H1 (cell line): ENCODE measurements at regions of chr11 and their contacts with region 1.

Region 1: GRCh38 chr11:60932605-60933356 is 8.5 kb downstream of the TMEM132A start:
- DNase-seq: no peak
- H3K4me3 ChIP-seq: no peak overlapping the region
- H3K27ac ChIP-seq: 0 out of 2 replicates have a peak overlapping the region, but pooled peaks have one; percentile 38
- H3K4me1 ChIP-seq: peaks cover 0 to 3% (median 1%) of the 10 kb centered on the region in 4 experiments; a peak in 4 of 7 replicates
- H3K27me3 ChIP-seq: no peaks in the 10 kb centered on the region
- CTCF ChIP-seq: no peak
- EP300 ChIP-seq: no peak
- POLR2A ChIP-seq: no peak
- RAD21 ChIP-seq: no peak

Region 2: DNA sequence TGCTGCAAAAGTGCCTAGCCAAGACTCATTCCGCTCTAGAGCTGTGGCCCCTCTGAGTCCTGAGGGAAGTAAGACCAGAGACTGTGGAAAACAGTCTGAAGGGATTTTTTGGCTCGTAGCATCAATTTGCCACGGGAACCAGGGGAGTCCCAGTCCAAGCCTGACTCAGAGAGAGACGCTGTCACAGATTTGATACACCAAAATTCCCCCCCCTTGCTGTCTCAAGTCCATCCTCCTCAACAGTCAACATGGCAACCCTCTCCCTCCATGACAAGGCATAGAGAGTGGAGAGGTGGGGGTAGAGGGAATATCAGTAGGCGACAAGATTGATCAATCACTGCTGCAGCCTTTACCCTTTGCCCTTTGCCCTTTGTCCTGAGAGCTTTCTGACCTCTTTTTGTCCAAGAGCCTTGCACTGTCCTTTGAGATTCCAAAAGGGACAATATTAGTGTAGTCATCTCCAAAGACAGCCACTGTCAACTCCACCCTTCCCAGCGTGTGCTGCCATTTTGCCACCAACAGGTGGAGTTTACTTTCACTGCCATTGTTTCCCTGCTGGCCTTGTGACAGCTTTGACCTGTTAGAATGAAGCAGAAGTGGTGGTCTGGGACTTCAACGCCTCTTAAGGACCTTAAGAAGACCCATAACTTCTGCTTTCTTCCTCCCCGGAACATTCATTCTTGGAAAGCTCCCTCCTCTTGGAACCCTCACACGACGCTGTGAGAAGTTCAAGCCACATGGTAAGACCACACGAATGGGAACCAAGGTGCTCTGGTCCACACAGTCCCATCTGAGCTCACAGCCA is 11.9 kb after region 1 on chr11:
- CTCF ChIA-PET with region 1: interaction called, 20 read pairs
- POLR2A ChIA-PET with region 1: interaction called, 8 read pairs
- DNase-seq: no peak
- H3K4me3 ChIP-seq: no peak overlapping the region
- H3K27ac ChIP-seq: no peak overlapping the region
- H3K4me1 ChIP-seq: peaks cover 0 to 11% (median 7%) of the 10 kb centered on the region in 4 experiments; a peak in 6 of 7 replicates
- H3K27me3 ChIP-seq: peaks cover 0 to 1% (median 0%) of the 10 kb centered on the region in 4 experiments; a peak in 1 of 7 replicates
- CTCF ChIP-seq: peak; percentile 41 to 59 (median 52)
- EP300 ChIP-seq: no peak
- POLR2A ChIP-seq: no peak
- RAD21 ChIP-seq: peak; percentile 22 to 44; a peak in 3 of 4 replicates

Region 3: DNA sequence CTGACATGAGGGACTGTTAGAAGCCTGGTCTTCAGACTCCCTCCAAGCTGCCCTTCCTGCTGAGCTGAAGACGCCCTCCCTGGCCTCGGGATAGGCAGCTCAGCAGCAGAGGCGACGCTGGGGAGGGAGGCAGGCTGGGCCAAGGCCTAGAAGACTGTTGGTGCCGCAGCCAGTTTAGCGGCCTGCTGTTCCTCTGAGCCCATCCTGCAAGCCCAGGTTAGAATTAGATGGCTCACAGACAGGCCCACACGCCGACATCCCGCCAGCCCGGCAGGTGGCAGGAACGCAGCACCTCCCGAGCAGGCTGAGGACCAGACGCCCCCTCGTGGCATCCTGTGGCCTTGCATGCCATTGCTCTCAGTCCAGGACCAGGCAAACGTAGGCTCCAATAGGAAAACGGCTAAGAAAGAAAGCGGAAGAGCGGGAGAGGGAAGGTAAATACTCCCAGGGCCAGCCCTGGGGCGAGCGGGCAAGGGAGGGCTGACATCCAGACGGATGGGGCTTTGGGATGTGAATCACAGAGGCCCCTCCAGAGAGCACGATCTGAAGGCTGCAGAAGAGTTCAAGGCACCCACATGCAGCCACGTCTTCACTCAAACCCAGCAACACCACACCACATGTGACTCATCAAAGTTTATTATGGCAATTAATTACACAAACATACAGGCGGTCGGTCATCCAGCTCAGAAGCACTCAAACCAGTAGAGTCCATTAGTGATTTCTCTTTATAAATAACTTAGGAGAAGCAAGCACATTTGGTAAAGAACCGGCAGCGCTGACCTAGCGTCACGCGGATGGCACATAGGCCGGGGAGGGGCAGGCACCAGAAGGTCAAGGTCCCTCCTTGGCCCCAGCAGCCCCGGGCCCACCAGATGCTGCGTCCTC is 197.1 kb after region 1 on chr11:
- CTCF ChIA-PET with region 1: no interaction called
- POLR2A ChIA-PET with region 1: no interaction called
- DNase-seq: peak; percentile 91 to 98
- H3K4me3 ChIP-seq: no peak overlapping the region
- H3K27ac ChIP-seq: no peak overlapping the region
- H3K4me1 ChIP-seq: peaks cover 0 to 8% (median 5%) of the 10 kb centered on the region in 4 experiments; a peak in 4 of 7 replicates
- H3K27me3 ChIP-seq: no peaks in the 10 kb centered on the region
- CTCF ChIP-seq: peak; percentile 100
- EP300 ChIP-seq: no peak
- POLR2A ChIP-seq: no peak
- RAD21 ChIP-seq: peak; percentile 98